HEK293T (cell line): ENCODE measurements at regions of chr12 and their contacts with region 1.

Region 1: DNA sequence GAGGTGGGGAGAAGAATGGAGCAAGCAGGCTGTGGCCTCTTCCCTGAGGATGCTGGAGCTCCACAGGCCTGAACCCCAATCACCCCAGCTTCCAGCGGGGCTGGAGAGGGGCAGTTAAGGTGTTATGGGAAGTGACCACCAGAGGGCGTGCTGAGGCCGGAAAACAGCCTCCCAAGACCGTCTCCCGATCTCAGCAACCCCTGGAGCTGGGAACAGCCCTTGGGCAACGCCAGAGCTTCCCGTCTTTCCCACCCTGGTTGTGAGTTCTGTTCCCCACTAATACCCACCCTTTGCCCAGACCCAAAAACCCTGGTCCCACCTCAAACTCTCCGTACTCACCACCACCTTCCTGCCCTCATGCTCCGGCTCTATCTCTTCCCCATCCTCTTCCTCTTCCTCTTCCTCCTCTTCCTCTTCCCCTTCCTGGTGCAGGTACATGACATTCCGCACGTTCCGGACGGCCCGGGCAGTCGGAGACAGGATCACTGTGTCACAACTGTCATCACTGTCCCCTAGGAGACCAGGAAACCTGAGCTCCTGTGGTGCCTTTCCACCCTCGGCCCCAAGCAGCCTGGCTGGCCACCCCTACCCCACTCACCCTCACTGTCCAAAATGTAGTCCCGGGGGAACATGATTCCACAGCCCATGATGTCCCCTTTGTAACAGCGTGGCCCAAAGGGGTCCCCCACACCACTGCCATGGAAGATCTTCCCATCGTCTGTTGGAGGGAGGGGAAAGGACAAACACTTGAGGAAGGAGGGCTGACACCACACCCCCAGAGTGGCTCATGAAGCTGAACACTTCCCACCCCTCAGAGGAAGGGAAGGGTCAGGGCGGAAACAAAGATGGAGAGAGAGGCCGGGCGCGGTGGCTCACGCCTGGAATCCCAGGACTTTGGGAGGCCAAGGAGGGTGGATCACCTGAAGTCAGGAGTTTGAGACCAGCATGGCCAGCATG is 12.9 kb downstream of the SPRYD3 start:
- DNase-seq: peak; percentile 87

Region 2: DNA sequence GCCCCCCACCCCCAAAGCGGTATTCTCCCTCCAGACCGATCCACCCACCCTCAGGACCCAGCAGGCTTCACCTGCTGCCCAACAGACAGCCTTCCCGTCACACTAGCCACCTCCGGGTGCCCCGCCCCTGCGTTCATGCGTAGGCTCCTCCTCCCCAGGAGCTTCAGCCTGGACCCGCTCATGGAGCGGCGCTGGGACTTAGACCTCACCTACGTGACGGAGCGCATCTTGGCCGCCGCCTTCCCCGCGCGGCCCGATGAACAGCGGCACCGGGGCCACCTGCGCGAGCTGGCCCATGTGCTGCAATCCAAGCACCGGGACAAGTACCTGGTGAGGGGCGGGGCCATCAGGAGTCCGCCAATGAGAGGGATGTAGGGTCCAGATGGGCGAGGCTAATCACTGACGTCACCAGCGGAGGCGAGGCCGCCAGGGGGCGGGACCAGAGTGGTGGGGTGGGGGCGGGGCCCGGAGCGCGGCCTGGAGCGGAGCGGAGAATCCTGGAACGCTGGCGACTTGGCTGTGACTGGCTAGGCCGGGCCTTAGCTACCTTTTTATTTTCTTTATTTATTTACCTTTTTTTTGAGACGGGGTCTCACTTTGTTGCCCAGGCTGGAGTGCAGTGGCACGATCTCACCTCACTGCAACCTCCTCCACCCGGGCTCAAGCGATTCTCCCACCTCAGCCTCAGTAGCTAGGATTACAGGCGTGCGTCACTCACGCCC is 12.0 kb before region 1 on chr12:
- CTCF ChIA-PET with region 1: interaction called, 46 read pairs
- POLR2A ChIA-PET with region 1: interaction called, 8 read pairs
- DNase-seq: peak; percentile 95

Region 3: GRCh38 chr12:53098982-53099651 is 32.9 kb after region 1 on chr12:
- CTCF ChIA-PET with region 1: interaction called, 68 read pairs
- POLR2A ChIA-PET with region 1: interaction called, 10 read pairs
- DNase-seq: peak; percentile 85